ENCODE measurements at regions of chr4 and their contacts with region 1.

Region 1: DNA sequence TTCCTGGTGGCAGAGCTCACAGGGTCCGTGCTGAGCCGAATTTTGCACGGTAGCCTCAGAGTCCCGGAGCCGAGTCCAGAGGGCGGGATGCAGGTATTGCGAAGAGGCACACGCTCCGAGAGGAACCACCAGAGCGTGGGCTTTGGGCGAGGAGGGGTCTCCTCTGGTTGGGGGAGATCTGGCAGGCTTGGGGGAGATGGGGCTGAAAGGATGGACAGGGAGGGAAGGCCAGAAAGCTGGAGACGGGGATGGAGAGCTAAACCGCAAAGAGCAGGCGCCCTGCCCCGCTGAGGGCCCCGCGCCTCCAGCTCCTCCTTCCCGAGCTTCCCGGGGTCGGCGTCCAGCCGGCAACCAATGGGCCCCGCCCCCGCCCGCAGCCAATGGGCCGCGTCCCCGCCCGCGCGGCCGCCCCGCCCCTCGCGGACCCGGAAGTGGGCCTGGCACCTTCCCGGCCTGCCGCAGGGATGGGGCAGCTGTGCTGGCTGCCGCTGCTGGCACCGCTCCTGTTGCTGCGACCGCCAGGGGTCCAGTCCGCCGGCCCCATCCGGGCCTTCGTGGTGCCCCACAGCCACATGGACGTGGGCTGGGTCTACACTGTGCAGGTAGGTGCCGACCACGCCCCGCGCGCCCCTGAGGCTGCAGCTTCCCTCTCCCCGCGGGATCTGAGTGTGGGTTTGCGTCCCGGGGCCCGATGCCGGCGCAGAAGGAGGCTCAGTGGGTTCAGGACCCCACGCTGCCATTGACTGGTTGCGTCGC is at the start of gene MAN2B2:
- DNase-seq: peak; percentile 51 to 89 (median 80)
- ATAC-seq: peak; percentile 93
- H3K4me3 ChIP-seq: peak within 1 kb of the TSS; percentile 98
- H3K4me3 Mint-ChIP-seq: peak within 1 kb of the TSS; percentile 93
- H3K27ac ChIP-seq: peak within 1 kb of the TSS; percentile 55 to 74
- H3K27ac Mint-ChIP-seq: peak within 1 kb of the TSS; percentile 79
- H3K4me1 ChIP-seq: peaks cover 30% of the 10 kb centered on the region
- H3K4me1 Mint-ChIP-seq: peaks cover 4% of the 10 kb centered on the region
- H3K27me3 ChIP-seq: no peaks in the 10 kb centered on the region
- H3K27me3 Mint-ChIP-seq: no peaks in the 10 kb centered on the region
- CTCF ChIP-seq: no peak
- total RNA-seq, gene MAN2B2: 25.9 to 28.5 TPM

Region 2: DNA sequence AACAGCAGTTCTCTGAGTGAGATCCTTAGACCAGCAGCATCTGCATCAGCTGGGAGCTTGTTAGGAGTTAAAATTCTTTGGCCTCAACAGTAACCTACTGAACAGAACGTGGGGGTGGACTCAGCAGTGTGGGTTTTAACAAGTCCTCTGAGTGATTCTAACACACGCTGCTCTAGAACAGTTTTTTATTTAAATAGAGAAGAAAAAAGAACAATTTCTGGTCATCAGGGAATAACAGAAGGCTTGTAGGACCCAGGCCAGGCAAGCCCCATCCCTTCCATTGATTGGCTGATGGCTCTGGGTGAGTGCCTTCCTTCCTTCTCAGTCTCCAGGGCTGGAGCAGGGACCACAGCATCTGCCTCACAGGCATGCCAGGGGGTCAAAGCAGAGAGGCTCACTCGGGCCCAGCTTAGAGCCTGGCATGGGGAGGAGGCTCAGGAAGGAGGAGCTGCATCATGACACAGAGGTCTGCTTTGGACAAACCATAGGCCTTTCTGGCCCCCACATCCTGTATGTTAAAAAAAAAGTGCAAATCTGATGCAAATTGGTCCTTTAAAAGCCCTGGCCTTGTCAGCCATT is 431.2 kb before region 1 on chr4:
- CTCF ChIA-PET with region 1: no interaction called
- POLR2A ChIA-PET with region 1: no interaction called
- intact Hi-C with region 1: no loop called
- DNase-seq: no peak
- ATAC-seq: no peak
- H3K4me3 ChIP-seq: no peak overlapping the region
- H3K4me3 Mint-ChIP-seq: no peak overlapping the region
- H3K27ac ChIP-seq: no peak overlapping the region
- H3K27ac Mint-ChIP-seq: no peak overlapping the region
- H3K4me1 ChIP-seq: no peaks in the 10 kb centered on the region
- H3K4me1 Mint-ChIP-seq: no peaks in the 10 kb centered on the region
- H3K27me3 ChIP-seq: no peaks in the 10 kb centered on the region
- H3K27me3 Mint-ChIP-seq: peaks cover 4% of the 10 kb centered on the region
- CTCF ChIP-seq: no peak

Region 3: DNA sequence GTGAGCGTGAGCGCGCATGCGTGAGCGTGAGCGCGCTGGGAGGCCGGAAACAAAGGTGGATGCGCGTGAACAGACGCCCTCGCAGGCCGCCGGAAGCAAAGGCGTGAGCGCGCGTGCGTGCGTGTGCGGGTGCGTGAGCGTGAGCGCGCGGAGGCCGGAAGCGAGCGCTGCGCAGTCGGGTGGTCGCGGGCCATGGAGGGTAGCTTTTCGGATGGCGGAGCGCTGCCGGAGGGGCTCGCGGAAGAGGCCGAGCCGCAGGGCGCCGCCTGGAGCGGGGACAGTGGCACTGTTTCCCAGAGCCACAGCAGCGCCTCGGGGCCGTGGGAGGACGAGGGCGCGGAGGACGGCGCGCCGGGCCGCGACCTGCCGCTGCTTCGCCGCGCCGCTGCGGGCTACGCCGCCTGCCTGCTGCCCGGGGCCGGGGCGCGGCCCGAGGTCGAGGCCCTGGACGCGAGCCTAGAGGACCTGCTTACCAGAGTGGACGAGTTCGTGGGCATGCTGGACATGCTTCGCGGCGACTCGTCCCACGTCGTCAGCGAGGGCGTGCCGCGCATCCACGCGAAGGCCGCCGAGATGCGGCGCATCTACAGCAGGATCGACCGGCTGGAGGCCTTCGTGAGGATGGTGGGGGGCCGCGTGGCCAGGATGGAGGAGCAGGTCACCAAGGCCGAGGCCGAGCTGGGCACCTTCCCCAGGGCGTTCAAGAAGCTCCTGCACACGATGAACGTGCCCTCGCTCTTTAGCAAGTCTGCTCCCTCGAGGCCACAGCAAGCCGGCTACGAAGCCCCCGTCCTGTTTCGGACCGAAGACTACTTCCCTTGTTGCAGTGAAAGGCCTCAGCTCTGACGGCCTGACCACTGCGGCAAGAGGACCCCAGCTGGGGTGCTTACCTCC is 141.3 kb after region 1 on chr4 and contains the start of gene BLOC1S4:
- CTCF ChIA-PET with region 1: interaction called, 7 read pairs
- POLR2A ChIA-PET with region 1: no interaction called
- intact Hi-C with region 1: loop called in 1 of 2 experiments (anchors 5 kb)
- DNase-seq: peak; percentile 79 to 98 (median 88)
- ATAC-seq: peak; percentile 79
- H3K4me3 ChIP-seq: peak within 1 kb of the TSS; percentile 95
- H3K4me3 Mint-ChIP-seq: peak within 1 kb of the TSS; percentile 99
- H3K27ac ChIP-seq: peak within 1 kb of the TSS; percentile 82 to 85
- H3K27ac Mint-ChIP-seq: peak within 1 kb of the TSS; percentile 99
- H3K4me1 ChIP-seq: peaks cover 31% of the 10 kb centered on the region
- H3K4me1 Mint-ChIP-seq: peaks cover 39% of the 10 kb centered on the region
- H3K27me3 ChIP-seq: no peaks in the 10 kb centered on the region
- H3K27me3 Mint-ChIP-seq: no peaks in the 10 kb centered on the region
- CTCF ChIP-seq: no peak
- total RNA-seq, gene BLOC1S4: 24.6 to 27.6 TPM

Region 4: DNA sequence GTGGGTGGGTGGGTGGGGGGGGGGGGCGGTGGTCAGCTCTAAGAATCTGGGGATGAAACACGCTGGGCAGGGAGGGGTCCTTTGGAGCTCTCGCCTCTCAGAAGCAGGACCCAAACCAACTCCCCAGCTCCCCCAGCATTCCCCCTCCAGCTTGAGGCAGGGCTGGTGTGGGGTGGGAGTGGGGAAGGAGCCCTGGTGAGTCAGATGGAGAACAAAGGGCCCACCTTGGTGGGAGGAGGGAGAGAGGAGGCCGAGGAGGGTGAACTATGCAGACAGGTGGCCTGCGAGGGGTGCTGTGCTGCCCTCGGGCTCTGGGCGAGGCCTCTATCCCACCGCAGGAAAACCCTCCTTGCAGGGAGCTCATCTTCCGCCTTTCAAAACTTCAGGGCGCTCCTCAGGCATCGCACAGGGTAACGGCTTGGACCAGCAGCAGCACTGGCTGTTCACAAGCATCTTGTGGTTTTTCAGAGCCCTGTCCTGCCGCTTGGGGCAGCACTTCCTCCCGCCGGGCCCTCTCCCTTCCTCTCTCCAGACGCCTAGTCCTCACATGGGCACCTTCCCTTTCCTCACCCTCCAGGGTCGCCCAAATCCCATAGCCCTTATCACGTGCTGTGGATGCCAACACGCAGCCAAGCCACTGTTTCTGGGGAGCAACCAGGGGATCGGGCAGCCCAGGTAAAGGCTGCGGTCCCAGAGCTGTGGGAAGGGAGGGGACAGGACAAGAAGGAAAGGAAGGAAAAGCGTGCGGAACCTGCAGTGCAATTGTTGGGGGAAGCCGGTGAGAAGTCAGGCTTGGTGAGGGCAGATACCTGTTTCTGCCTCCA is 527.0 kb after region 1 on chr4:
- CTCF ChIA-PET with region 1: no interaction called
- POLR2A ChIA-PET with region 1: no interaction called
- intact Hi-C with region 1: loop called in 1 of 2 experiments (anchors 5 kb)
- DNase-seq: peak; percentile 18 to 73 (median 44)
- ATAC-seq: peak; percentile 35
- H3K4me3 ChIP-seq: peak overlapping the region; percentile 84
- H3K4me3 Mint-ChIP-seq: peak overlapping the region; percentile 84
- H3K27ac ChIP-seq: no peak overlapping the region
- H3K27ac Mint-ChIP-seq: peak overlapping the region; percentile 7
- H3K4me1 ChIP-seq: peaks cover 29% of the 10 kb centered on the region
- H3K4me1 Mint-ChIP-seq: peaks cover 16% of the 10 kb centered on the region
- H3K27me3 ChIP-seq: no peaks in the 10 kb centered on the region
- H3K27me3 Mint-ChIP-seq: no peaks in the 10 kb centered on the region
- CTCF ChIP-seq: peak; percentile 55

Measured in CD4-positive, alpha-beta T cell (primary cell).